Activated B cell treated with CpG ODN at 0.5 μM for 24 hours (primary cell): ENCODE measurements at regions of chr10 and their contacts with region 1.

Region 1: GRCh38 chr10:110610308-110610774 is 33.8 kb upstream of the RBM20 start:
- DNase-seq: no peak
- ATAC-seq: peak; percentile 41
- H3K4me3 Mint-ChIP-seq: no peak overlapping the region
- H3K27ac Mint-ChIP-seq: no peak overlapping the region
- H3K4me1 Mint-ChIP-seq: peaks cover 30% of the 10 kb centered on the region
- H3K27me3 Mint-ChIP-seq: no peaks in the 10 kb centered on the region
- CTCF ChIP-seq: peak; percentile 59

Region 2: DNA sequence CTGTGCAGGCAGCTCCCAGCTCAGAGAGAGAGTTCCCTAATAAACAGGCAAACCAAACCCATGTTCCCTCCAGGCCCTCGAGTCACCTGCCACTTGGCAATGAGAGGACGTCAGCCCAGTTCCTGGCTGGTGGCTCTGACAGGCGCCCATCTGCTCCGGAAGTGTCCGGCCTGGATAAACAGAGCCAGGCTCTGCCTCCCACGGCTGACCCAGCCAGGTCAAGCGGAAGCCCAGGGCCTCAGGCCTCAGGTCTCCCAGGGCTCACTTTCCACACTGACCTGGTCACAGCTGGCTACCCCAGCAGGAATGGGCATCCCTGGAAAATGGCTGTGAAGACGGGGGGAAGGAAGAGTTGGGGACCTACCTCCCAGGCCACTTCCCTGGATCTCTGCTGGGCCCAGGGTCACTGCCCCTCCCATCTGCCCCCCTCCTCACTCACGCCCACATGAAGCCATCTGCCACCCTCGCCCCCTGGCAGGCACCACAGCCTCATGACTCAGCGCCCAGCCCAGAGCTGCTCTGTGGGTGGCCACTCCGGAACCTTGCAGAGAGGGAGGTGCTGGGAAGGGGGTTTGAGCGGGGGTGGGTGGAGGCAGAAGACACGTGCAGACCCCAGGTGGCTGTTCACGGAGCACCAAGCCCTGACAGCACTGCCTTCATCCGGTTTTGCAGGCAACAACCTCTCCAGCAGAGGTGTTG is 150.1 kb before region 1 on chr10:
- CTCF ChIA-PET with region 1: no interaction called
- POLR2A ChIA-PET with region 1: no interaction called
- intact Hi-C with region 1: no loop called
- DNase-seq: peak; percentile 40
- ATAC-seq: peak; percentile 68
- H3K4me3 Mint-ChIP-seq: peak overlapping the region; percentile 38
- H3K27ac Mint-ChIP-seq: peak overlapping the region; percentile 71
- H3K4me1 Mint-ChIP-seq: peaks cover 75% of the 10 kb centered on the region
- H3K27me3 Mint-ChIP-seq: no peaks in the 10 kb centered on the region
- CTCF ChIP-seq: no peak

Region 3: DNA sequence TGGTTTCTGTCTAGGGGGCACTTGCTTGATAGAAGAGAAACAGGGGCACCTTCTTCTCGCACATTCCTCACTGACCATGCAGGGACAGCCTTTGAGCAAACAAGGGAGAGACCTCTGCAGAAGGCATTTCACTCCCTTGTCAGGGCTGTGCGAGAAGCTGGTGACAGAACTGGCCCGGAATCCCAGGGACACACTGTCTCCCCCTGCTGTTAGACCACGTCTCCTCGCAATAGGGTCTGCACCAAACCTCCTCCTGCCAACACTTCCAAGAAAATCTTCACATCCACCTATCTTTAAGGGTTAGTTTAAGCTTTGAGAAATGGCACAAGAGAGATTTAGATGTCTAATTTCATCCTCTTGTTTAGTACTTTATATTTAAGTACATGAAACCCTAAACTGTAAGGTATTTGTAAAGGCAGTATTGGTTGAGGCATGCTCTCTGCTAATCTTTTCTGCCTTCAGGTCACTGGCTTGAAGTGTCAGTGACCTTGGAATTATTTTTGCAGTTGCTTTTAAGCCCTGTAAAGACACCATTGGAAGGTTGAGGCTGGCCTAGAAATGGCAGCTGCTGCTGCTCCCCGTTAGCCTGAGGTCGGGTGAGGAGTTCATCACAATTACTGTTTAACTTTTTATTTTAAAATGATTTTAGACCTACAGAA is 70.8 kb after region 1 on chr10:
- CTCF ChIA-PET with region 1: interaction called, 14 read pairs
- POLR2A ChIA-PET with region 1: no interaction called
- intact Hi-C with region 1: loop called (anchors 1 kb)
- DNase-seq: no peak
- ATAC-seq: peak; percentile 31
- H3K4me3 Mint-ChIP-seq: no peak overlapping the region
- H3K27ac Mint-ChIP-seq: no peak overlapping the region
- H3K4me1 Mint-ChIP-seq: peaks cover 3% of the 10 kb centered on the region
- H3K27me3 Mint-ChIP-seq: peaks cover 14% of the 10 kb centered on the region
- CTCF ChIP-seq: no peak

Region 4: DNA sequence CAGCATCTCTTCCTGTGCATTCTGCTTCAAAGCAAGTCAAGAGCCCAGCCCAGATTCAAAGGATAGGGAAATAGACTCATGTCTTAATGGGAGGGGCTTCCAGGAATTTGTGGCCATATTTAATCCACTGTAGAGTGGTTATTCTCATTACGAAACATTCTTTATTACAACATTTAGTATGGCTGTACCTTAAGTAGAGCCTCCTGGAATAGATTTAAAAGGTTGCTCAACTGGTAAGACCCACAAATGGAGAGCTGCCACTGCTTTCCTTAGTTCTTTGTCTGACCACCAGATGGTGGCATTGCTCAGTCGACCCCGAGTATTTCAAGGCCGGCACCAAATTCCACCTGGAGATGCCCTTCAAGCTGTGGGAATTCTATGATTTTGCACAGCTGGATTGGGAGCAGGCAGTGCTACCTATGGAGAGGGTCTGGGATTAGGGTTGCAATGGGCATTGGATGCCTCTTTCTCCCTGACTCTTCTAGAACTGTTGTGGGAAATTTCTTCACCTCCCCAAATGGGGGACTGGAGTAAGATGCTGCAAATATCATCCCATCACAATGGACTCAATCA is 136.0 kb after region 1 on chr10:
- CTCF ChIA-PET with region 1: interaction called, 4 read pairs
- POLR2A ChIA-PET with region 1: no interaction called
- intact Hi-C with region 1: loop called (anchors 1 kb)
- DNase-seq: peak; percentile 39
- ATAC-seq: peak; percentile 75
- H3K4me3 Mint-ChIP-seq: no peak overlapping the region
- H3K27ac Mint-ChIP-seq: no peak overlapping the region
- H3K4me1 Mint-ChIP-seq: peaks cover 7% of the 10 kb centered on the region
- H3K27me3 Mint-ChIP-seq: peaks cover 5% of the 10 kb centered on the region
- CTCF ChIP-seq: peak; percentile 40

Region 5: DNA sequence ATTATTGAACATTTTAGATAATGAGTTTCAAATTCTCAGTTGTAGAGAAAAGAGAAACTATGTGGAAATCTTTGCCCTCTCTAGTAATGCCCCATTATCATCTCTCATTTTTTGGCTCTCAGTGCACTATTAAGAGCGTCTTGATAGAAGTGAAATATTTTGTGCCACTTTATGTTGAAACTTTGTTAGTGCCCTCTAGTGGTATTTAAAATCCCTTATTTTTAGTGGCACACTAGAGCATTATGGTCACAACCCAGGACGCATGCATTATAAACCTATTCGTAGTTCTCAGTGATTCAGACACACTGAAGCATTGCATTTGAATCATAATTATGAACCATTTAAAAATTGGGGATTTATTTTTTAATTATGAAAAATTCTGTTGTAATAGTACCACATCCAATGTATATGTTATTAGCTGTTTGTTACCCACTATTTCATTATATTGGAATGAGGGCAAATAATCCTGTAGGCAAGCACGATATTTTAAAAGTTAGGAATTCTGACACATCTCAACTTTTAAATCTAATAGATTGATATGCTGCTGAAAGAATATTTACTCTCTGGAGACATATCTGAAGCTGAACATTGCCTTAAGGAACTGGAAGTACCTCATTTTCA is 283.3 kb after region 1 on chr10:
- CTCF ChIA-PET with region 1: interaction called, 5 read pairs
- POLR2A ChIA-PET with region 1: no interaction called
- intact Hi-C with region 1: loop called (anchors 1 kb)
- DNase-seq: no peak
- ATAC-seq: peak; percentile 93
- H3K4me3 Mint-ChIP-seq: no peak overlapping the region
- H3K27ac Mint-ChIP-seq: no peak overlapping the region
- H3K4me1 Mint-ChIP-seq: peaks cover 22% of the 10 kb centered on the region
- H3K27me3 Mint-ChIP-seq: no peaks in the 10 kb centered on the region
- CTCF ChIP-seq: no peak

Region 6: DNA sequence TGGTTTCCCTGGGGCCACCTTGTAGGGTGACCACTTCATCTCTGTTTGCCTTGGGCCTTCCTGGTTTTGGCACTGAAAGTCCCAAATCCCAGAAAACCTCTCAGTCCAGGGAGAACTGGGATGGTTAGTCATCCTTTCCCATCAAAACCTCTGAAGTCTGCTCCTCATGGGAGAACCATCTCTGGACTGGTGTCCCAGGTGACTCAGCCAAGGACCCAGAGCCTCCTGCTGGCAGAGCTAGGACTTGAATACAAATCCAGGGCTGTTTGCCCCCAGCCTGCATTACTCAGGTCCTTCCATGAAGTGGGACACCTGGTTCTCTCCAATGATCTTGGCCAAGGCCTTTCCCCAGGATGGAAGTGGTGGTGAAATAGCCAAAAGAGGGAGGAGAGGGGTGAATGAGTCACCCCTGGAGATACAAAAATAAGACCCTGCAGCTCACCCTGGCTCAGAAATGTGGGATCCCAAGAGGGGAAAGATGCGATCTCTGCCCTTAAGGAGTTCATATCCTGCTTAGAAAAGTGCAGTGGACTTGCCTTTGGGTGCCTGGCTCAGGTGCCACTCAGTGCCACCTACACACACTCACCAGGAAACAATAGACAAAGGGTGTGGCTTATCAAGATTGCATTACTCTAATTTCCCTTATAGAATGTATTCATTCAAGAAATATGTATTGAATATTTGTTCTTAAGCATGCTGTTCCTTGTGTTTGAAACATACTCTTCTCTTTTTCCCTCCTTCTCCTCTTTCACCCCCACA is 488.5 kb after region 1 on chr10:
- CTCF ChIA-PET with region 1: no interaction called
- POLR2A ChIA-PET with region 1: no interaction called
- intact Hi-C with region 1: loop called (anchors 1 kb)
- DNase-seq: no peak
- ATAC-seq: no peak
- H3K4me3 Mint-ChIP-seq: no peak overlapping the region
- H3K27ac Mint-ChIP-seq: no peak overlapping the region
- H3K4me1 Mint-ChIP-seq: no peaks in the 10 kb centered on the region
- H3K27me3 Mint-ChIP-seq: peaks cover 14% of the 10 kb centered on the region
- CTCF ChIP-seq: no peak

Region 7: GRCh38 chr10:112314822-112315474 is 1704.6 kb after region 1 on chr10:
- CTCF ChIA-PET with region 1: no interaction called
- POLR2A ChIA-PET with region 1: no interaction called
- intact Hi-C with region 1: loop called (anchors 2 kb)
- DNase-seq: peak; percentile 34
- ATAC-seq: peak; percentile 62
- H3K4me3 Mint-ChIP-seq: no peak overlapping the region
- H3K27ac Mint-ChIP-seq: no peak overlapping the region
- H3K4me1 Mint-ChIP-seq: no peaks in the 10 kb centered on the region
- H3K27me3 Mint-ChIP-seq: peaks cover 12% of the 10 kb centered on the region
- CTCF ChIP-seq: peak; percentile 31